Activated T-helper 1 cell treated with anti-CD3 and anti-CD28 coated beads, Interleukin-12 subunit alpha, Interleukin-12 subunit beta, Interleukin-2, Interleukin-4 antibody, amounts not matched to agents 30 ng/mL and 10 ng/mL and 1 ng/mL, durations not matched to agents 14 hours and 24 hours and 36 hours (primary cell): ENCODE measurements at regions of chr12 and their contacts with region 1.

Region 1: DNA sequence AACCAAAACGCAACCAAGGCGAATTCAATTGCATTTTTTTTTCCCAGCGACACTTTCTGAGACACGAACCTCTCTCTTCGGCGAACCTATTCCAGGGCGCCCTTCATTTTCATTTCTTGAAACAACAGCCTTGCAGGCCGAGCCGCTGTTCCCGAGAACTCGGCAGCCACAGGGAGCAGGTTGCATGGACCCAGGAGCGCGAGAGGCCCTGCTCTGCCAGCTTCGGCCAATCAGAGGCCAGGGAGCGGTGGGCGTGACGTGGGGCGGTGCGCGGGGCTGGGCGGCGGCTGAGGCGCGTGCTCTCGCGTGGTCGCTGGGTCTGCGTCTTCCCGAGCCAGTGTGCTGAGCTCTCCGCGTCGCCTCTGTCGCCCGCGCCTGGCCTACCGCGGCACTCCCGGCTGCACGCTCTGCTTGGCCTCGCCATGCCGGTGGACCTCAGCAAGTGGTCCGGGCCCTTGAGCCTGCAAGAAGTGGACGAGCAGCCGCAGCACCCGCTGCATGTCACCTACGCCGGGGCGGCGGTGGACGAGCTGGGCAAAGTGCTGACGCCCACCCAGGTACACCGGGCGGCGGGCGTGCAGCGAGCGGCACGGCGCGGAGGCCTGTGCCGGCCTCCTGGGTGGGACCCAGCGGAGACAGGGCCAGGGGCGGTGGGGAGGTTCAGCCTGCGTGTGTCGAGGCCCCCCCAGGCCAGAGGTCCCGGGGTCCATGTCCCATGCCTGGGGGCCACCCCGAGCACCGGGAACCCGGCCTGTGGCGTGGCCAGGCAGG is at the start of gene PEBP1:
- DNase-seq: peak; percentile 93
- H3K4me3 Mint-ChIP-seq: peak within 1 kb of the TSS; percentile 95
- H3K27ac Mint-ChIP-seq: peak within 1 kb of the TSS; percentile 89
- H3K4me1 Mint-ChIP-seq: peaks cover 18% of the 10 kb centered on the region
- H3K27me3 Mint-ChIP-seq: no peaks in the 10 kb centered on the region
- total RNA-seq, gene PEBP1: 200 and 205 TPM in 2 replicates

Region 2: DNA sequence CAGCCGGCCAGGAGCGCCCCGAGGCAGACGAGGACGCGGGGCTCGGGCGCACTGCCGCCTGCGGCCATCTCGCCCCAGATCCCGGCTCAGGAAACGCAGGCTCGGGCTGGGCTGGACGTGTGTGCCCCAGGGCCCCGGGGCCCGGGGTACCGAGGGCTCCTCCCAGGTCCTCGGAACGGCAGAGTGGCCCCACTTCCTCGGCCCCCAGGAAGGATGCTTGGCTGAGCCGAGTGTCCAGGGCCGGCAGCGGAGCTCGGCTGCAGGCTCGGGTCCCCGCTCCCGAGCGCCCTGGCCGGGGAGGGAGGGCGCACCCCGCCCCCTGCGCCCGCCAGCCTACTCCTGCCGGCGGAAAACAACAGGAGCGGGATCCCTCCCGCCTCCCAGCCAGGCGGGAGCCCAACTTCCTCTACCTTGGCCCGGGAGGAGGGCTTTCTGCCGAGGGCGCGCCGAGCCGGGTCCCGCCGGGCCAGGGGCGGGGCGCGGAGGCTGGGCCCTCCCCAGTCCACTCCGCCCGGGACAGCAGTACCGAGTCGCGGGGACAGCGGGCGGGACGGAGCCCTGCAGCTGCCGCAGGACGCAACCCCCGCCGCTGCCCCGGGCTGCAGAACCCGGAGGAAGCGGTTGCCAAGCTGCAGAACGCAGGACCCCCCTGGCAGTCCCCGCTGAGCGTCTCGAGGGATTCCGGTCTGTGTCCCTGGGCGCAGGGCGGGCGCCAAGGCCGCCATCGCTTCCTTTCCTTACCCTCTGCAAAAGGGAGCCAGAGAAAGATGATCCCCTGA is 32.2 kb before region 1 on chr12 and contains the start of gene VSIG10:
- intact Hi-C with region 1: loop called (anchors 1 kb)
- DNase-seq: peak; percentile 16
- H3K4me3 Mint-ChIP-seq: peak within 1 kb of the TSS; percentile 95
- H3K27ac Mint-ChIP-seq: peak within 1 kb of the TSS; percentile 44
- H3K4me1 Mint-ChIP-seq: peaks cover 10% of the 10 kb centered on the region
- H3K27me3 Mint-ChIP-seq: peaks cover 29% of the 10 kb centered on the region
- total RNA-seq, gene VSIG10: 15.1 and 16.0 TPM in 2 replicates

Region 3: GRCh38 chr12:118120579-118121363 is 15.2 kb before region 1 on chr12:
- intact Hi-C with region 1: loop called (anchors 1 kb)
- DNase-seq: peak; percentile 28
- H3K4me3 Mint-ChIP-seq: no peak overlapping the region
- H3K27ac Mint-ChIP-seq: no peak overlapping the region
- H3K4me1 Mint-ChIP-seq: peaks cover 14% of the 10 kb centered on the region
- H3K27me3 Mint-ChIP-seq: peaks cover 2% of the 10 kb centered on the region